ENCODE measurements at regions of chr3 and their contacts with region 1.

Region 1: DNA sequence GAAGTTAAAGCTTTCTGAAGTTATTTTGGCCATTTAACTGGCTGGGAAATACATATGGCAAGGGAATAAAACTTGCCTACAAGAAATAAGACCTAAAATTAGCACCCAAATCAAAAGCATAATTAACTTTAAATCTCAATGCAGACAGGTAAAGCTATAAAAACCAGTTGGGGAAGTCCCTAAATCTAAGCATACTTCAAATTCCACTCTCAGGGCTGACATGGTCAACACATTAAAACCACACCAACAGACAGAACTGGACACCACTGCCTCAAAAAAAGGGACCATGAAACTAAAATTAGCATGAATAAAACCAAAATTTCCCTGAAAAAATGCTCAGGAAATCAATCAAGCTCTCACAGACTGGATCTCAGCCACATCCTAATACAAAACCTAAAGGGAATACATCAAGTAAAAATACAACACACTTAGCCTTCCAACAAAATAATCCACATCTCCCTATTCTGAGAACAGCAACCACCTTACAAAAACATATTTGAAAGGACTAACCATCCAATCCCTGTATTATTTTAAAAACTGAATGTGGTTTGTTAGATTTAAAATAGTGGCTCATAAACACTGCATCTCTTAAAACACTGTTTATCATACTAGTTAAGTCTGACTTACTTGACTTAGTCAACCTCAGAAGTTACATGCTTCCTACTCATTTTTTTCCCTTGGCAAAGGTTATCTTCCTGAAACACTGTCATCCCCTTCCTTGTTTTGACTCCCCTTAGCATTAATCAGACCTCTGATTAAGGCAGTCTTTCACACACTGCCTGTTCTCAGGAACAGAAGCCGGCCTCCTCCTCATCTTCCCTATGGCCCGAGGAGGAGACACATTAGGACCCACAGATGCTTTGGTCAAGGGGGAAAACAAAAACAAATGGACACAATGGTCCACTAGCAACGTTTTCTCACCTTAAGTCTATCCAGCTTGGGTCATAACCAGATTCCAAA is 8.3 kb downstream of the TRA2B start:
- DNase-seq: no peak
- H3K4me3 Mint-ChIP-seq: peak overlapping the region; percentile 98
- H3K27ac Mint-ChIP-seq: peak overlapping the region; percentile 21
- H3K4me1 Mint-ChIP-seq: peaks cover 93% of the 10 kb centered on the region
- H3K27me3 Mint-ChIP-seq: no peaks in the 10 kb centered on the region
- CTCF ChIP-seq: no peak

Region 2: GRCh38 chr3:185813691-185814215 is 115.7 kb before region 1 on chr3:
- CTCF ChIA-PET with region 1: no interaction called
- POLR2A ChIA-PET with region 1: interaction called, 17 read pairs
- intact Hi-C with region 1: no loop called
- DNase-seq: peak; percentile 73
- H3K4me3 Mint-ChIP-seq: peak overlapping the region; percentile 39
- H3K27ac Mint-ChIP-seq: peak overlapping the region; percentile 85
- H3K4me1 Mint-ChIP-seq: peaks cover 39% of the 10 kb centered on the region
- H3K27me3 Mint-ChIP-seq: no peaks in the 10 kb centered on the region
- CTCF ChIP-seq: no peak

Region 3: DNA sequence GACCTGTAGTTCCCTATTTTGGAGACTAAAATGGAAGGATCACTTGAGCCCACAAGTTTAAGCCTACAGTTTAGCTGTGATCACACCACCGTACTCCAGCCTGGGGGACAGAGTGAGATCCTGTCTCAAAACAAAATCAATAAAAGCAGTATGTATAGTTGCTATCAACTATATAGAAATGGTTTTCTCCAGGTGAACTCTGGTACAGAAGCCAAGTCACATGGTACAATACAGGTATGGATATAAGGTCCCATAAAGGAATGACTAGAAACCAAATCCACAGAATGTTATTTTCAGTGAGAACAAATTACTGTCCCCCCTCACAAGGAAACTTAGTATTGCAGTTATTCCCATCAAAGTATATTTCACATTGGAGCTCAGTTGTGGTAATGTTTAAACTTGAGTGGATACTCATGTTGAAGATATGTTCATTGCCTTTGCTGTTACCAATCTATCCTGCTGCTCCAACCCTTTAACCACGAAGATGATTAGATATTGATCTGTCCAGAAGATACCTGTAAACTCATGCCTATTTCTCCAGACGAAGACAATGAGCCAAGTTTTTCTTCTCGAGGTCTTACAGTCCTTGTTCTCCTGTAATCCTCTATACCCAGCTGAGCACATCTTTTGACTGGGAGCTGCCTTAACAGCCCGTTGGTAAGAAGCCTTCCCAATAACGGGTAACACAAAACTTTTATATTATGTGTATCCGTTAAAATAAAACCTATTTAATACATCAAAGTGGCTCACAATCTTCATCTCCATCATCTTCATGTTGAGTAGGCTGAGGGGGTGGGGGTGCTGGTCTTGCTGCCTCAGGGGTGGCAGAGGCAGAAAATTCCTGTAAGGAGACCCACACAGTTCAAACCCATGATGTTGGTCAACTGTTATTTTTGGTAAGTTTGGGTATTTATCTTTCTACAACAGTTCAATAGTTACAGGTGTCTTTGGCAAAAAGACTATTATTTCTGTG is 16.3 kb before region 1 on chr3:
- CTCF ChIA-PET with region 1: interaction called, 3 read pairs
- POLR2A ChIA-PET with region 1: interaction called, 91 read pairs
- intact Hi-C with region 1: no loop called
- DNase-seq: no peak
- H3K4me3 Mint-ChIP-seq: no peak overlapping the region
- H3K27ac Mint-ChIP-seq: no peak overlapping the region
- H3K4me1 Mint-ChIP-seq: no peaks in the 10 kb centered on the region
- H3K27me3 Mint-ChIP-seq: no peaks in the 10 kb centered on the region
- CTCF ChIP-seq: no peak

Measured in MCF 10A (cell line).